Naive thymus-derived CD4-positive, alpha-beta T cell (primary cell): ENCODE measurements at regions of chr5 and their contacts with region 1.

Region 1: DNA sequence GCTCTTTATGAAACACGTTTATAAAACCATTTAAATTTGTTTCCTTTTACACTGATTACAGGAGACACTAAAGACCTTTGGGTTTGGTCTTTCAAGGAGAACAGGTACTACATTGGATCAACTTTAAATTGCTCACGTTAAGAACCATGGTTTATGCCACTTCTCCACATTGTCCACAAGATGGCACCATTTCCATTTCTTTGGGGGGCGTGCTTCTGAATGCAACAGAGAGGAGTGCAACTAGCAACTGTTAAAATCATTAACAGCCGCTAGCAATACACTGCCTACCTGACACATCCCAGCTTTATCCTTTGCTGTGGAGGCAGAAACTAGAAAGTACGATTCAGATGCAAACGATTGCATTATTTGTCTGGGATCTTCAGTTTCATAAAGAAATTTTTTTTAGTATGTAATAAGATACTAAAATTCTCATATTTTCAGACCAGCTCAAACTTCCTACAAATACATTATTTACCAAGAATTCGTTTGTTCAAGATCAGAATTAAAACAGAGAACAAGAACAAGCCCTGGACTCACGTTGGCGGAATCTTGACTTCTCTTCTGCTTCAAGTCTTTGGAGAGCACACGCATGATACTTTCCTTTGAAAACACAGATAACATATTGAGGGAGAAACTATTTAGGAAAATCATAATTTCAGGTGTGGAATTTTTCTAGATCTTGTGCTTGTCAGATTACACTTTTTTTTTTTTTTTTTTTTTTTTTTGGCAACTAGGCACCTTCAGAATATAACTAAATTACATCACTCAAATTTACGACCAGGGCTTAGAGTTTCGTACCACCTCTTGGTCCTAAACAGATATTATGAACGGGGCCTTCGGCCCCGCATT is 702 bp downstream of the CDC20B start:
- DNase-seq: peak in 8 of 9 donors; percentile 53 to 81 (median 75)
- ATAC-seq: peak; percentile 80
- H3K4me3 ChIP-seq: peak overlapping the region; percentile 42
- H3K4me3 Mint-ChIP-seq: peak overlapping the region; percentile 78 to 93 (median 86)
- H3K27ac ChIP-seq: no peak overlapping the region
- H3K27ac Mint-ChIP-seq: peak overlapping the region in 4 of 9 donors; percentile 4 to 83 (median 57)
- H3K4me1 ChIP-seq: peaks cover 14 to 25% of the 10 kb centered on the region in 2 donors
- H3K4me1 Mint-ChIP-seq: peaks cover 23 to 45% (median 35%) of the 10 kb centered on the region in 7 donors
- H3K27me3 ChIP-seq: peaks cover 25 to 42% of the 10 kb centered on the region in 2 donors
- H3K27me3 Mint-ChIP-seq: peaks cover 73 to 88% (median 78%) of the 10 kb centered on the region in 5 donors

Region 2: GRCh38 chr5:55037046-55037771 is 135.1 kb before region 1 on chr5:
- CTCF ChIA-PET with region 1: no interaction called
- POLR2A ChIA-PET with region 1: no interaction called
- intact Hi-C with region 1: no loop called
- DNase-seq: peak in 8 of 9 donors; percentile 10 to 69 (median 50)
- ATAC-seq: peak; percentile 89
- H3K4me3 ChIP-seq: no peak overlapping the region
- H3K4me3 Mint-ChIP-seq: peak overlapping the region; percentile 6 to 55 (median 48)
- H3K27ac ChIP-seq: peak overlapping the region; percentile 49
- H3K27ac Mint-ChIP-seq: peak overlapping the region; percentile 55 to 99 (median 86)
- H3K4me1 ChIP-seq: peaks cover 17 to 31% of the 10 kb centered on the region in 2 donors
- H3K4me1 Mint-ChIP-seq: peaks cover 11 to 53% (median 32%) of the 10 kb centered on the region in 7 donors
- H3K27me3 ChIP-seq: no peaks in the 10 kb centered on the region
- H3K27me3 Mint-ChIP-seq: no peaks in the 10 kb centered on the region

Region 3: GRCh38 chr5:55232985-55233928 is 61.0 kb after region 1 on chr5 and contains the start of gene CCNO:
- CTCF ChIA-PET with region 1: interaction called, 7 read pairs
- POLR2A ChIA-PET with region 1: no interaction called
- intact Hi-C with region 1: loop called (anchors 1 to 2 kb)
- DNase-seq: peak in 8 of 9 donors; percentile 30 to 76 (median 50)
- ATAC-seq: peak; percentile 78
- H3K4me3 ChIP-seq: peak within 1 kb of the TSS; percentile 59
- H3K4me3 Mint-ChIP-seq: peak within 1 kb of the TSS; percentile 81 to 94 (median 86)
- H3K27ac ChIP-seq: no peak within 1 kb of the TSS
- H3K27ac Mint-ChIP-seq: peak within 1 kb of the TSS in 3 of 9 donors; percentile 25 to 41 (median 38)
- H3K4me1 ChIP-seq: peaks cover 22 to 27% of the 10 kb centered on the region in 2 donors
- H3K4me1 Mint-ChIP-seq: peaks cover 19 to 46% (median 29%) of the 10 kb centered on the region in 7 donors
- H3K27me3 ChIP-seq: peaks cover 9 to 35% of the 10 kb centered on the region in 2 donors
- H3K27me3 Mint-ChIP-seq: peaks cover 69 to 87% (median 76%) of the 10 kb centered on the region in 5 donors
- total RNA-seq, gene CCNO: not detected

Region 4: GRCh38 chr5:55278778-55279177 is 106.5 kb after region 1 on chr5:
- CTCF ChIA-PET with region 1: interaction called, 3 read pairs
- POLR2A ChIA-PET with region 1: no interaction called
- intact Hi-C with region 1: loop called in 1 of 2 experiments (anchors 5 kb)
- DNase-seq: no peak
- ATAC-seq: no peak
- H3K4me3 ChIP-seq: no peak overlapping the region
- H3K4me3 Mint-ChIP-seq: no peak overlapping the region
- H3K27ac ChIP-seq: no peak overlapping the region
- H3K27ac Mint-ChIP-seq: no peak overlapping the region
- H3K4me1 ChIP-seq: no peaks in the 10 kb centered on the region
- H3K4me1 Mint-ChIP-seq: no peaks in the 10 kb centered on the region
- H3K27me3 ChIP-seq: no peaks in the 10 kb centered on the region
- H3K27me3 Mint-ChIP-seq: no peaks in the 10 kb centered on the region

Region 5: DNA sequence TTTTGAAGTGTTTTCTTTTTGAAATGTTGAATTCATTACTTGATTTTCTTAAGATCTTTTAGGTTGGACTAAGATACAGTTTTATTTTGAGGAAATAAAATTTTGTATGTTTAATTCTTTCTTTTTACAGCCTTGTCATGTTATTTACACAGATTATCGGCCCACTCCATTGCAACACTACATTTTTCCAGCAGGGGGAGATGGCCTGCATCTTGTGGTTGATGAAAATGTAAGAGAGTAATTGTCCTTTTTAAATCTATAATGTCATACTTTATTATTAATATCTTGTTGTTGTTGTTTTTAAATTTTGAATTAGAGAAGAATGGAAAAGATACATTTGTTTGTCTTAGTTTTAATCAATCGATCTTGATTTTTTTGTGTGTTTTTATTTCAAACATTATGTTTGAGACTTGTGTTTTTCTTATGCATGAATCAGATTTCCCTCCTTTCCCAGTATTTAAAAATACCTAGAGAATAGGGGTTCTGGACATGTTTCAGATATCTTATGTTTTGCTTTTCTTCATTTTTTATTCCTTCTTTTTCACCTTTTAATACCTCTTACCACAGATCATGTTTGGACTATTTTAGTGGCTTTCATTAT is 172.2 kb after region 1 on chr5:
- CTCF ChIA-PET with region 1: no interaction called
- POLR2A ChIA-PET with region 1: no interaction called
- intact Hi-C with region 1: loop called in 1 of 2 experiments (anchors 1 kb)
- DNase-seq: peak; percentile 18 to 60 (median 47)
- ATAC-seq: peak; percentile 79
- H3K4me3 ChIP-seq: no peak overlapping the region
- H3K4me3 Mint-ChIP-seq: no peak overlapping the region
- H3K27ac ChIP-seq: no peak overlapping the region
- H3K27ac Mint-ChIP-seq: no peak overlapping the region
- H3K4me1 ChIP-seq: no peaks in the 10 kb centered on the region
- H3K4me1 Mint-ChIP-seq: peaks cover 2 to 11% (median 3%) of the 10 kb centered on the region in 7 donors
- H3K27me3 ChIP-seq: no peaks in the 10 kb centered on the region
- H3K27me3 Mint-ChIP-seq: no peaks in the 10 kb centered on the region

Region 6: GRCh38 chr5:55534436-55535198 is 362.3 kb after region 1 on chr5 and contains the start of gene PLPP1:
- CTCF ChIA-PET with region 1: no interaction called
- POLR2A ChIA-PET with region 1: no interaction called
- intact Hi-C with region 1: loop called in 1 of 2 experiments (anchors 2 kb)
- DNase-seq: peak; percentile 74 to 91 (median 86)
- ATAC-seq: peak; percentile 91
- H3K4me3 ChIP-seq: peak within 1 kb of the TSS; percentile 83
- H3K4me3 Mint-ChIP-seq: peak within 1 kb of the TSS; percentile 86 to 97 (median 94)
- H3K27ac ChIP-seq: peak within 1 kb of the TSS; percentile 91
- H3K27ac Mint-ChIP-seq: peak within 1 kb of the TSS; percentile 79 to 96 (median 91)
- H3K4me1 ChIP-seq: peaks cover 6 to 26% of the 10 kb centered on the region in 2 donors
- H3K4me1 Mint-ChIP-seq: peaks cover 20 to 61% (median 50%) of the 10 kb centered on the region in 7 donors
- H3K27me3 ChIP-seq: no peaks in the 10 kb centered on the region
- H3K27me3 Mint-ChIP-seq: no peaks in the 10 kb centered on the region
- total RNA-seq, gene PLPP1: 8.0 to 31.3 (median 8.4) TPM

Region 7: DNA sequence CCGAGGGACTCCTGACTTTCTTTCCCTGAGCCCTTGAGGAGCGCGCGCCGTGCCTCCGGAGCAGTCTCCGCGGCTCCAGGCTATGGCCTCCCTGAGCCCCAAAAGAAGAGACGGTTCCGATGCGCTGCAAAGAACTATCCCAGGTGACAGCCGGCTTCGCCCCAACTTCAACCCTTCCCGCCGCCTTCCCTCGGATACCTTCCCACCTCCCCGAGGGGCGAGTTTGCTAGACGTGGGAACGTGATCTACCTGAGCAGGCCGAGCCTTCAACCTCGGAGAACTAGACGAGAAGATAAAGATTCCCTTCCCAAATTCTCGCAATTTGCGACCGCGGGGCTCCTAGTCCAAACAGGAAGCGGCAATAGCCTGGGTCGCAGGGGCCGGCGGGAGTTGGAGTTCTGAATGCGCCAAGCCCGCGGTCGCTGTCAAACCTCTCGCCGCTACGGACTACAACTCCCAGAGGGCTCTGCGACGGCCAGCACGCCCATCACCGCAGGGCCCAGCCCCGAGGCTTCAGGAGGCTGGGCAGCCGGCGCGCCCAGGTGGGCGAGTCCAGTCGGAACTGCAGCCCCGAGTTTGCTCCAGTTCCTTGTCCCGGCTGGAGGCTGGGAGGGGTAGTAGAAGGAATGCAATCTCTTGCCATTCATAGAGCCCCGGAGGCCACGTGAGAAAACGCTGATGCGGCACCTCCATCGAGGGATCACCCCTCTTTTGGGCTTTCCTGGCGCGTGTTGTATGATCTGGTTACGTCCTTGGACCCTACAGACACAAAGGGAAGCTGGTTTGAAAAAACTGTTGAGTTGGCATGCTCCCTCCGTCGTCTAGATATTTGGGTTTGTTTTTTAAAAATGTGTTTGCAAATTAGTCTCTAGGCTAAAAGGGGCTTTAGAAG is 539.9 kb after region 1 on chr5 and contains the start of gene SLC38A9:
- CTCF ChIA-PET with region 1: no interaction called
- POLR2A ChIA-PET with region 1: no interaction called
- intact Hi-C with region 1: loop called in 1 of 2 experiments (anchors 5 kb)
- DNase-seq: peak; percentile 82 to 91 (median 90)
- ATAC-seq: peak; percentile 100
- H3K4me3 ChIP-seq: peak within 1 kb of the TSS; percentile 87
- H3K4me3 Mint-ChIP-seq: peak within 1 kb of the TSS; percentile 94 to 99 (median 98)
- H3K27ac ChIP-seq: peak within 1 kb of the TSS; percentile 72
- H3K27ac Mint-ChIP-seq: peak within 1 kb of the TSS; percentile 76 to 97 (median 91)
- H3K4me1 ChIP-seq: peaks cover 12 to 16% of the 10 kb centered on the region in 2 donors
- H3K4me1 Mint-ChIP-seq: peaks cover 20 to 40% (median 29%) of the 10 kb centered on the region in 7 donors
- H3K27me3 ChIP-seq: no peaks in the 10 kb centered on the region
- H3K27me3 Mint-ChIP-seq: peaks cover 0 to 3% (median 0%) of the 10 kb centered on the region in 5 donors
- total RNA-seq, gene SLC38A9: 17.7 to 32.6 (median 30.4) TPM